SK-N-SH (cell line): ENCODE measurements at regions of chr2 and their contacts with region 1.

Region 1: GRCh38 chr2:29309090-29310029 is 194.1 kb downstream of the CLIP4 start:
- DNase-seq: peak; percentile 78
- H3K4me3 ChIP-seq: no peak overlapping the region
- H3K27ac ChIP-seq: peak overlapping the region in 1 of 2 experiments; percentile 93; a peak in 2 of 4 replicates
- H3K4me1 ChIP-seq: peaks cover 7 to 82% of the 10 kb centered on the region in 2 experiments; a peak in 2 of 4 replicates
- H3K27me3 ChIP-seq: no peaks in the 10 kb centered on the region
- CTCF ChIP-seq: peak; percentile 95
- EP300 ChIP-seq: no peak
- RAD21 ChIP-seq: peak; percentile 73

Region 2: DNA sequence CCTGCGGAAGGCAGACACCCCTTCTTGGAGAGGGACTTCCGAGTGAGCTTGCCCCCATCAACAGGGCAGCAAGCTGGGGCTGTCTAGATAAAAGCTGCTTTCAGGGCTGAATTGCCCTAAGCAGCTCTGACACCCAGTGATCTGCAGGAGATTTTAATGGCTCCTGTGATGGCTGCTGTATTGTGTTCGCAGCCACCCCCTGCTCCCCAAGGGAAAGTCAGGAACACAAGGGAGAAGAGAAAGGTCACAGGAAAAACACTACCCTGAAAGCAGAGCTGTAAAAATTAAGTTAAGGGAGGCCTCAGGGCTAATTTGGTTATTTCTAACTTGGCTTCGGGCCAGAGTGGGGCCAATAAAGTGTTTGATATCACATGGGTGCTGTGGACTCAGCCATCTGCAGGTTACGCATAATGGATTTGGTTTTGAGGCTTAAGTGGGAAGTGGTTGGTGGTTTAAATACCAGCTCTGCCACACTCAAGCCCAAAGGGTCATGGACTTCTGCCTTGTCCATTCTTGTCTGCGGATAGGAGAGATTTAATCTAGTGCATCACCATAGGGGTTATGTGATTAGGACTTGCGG is 46.6 kb before region 1 on chr2:
- CTCF ChIA-PET with region 1: interaction called, 38 read pairs
- POLR2A ChIA-PET with region 1: interaction called, 10 read pairs
- DNase-seq: peak; percentile 79
- H3K4me3 ChIP-seq: no peak overlapping the region; a peak in 1 of 4 replicates
- H3K27ac ChIP-seq: peak overlapping the region; percentile 4 to 100; a peak in 3 of 4 replicates
- H3K4me1 ChIP-seq: peaks cover 0 to 58% of the 10 kb centered on the region in 2 experiments; a peak in 3 of 4 replicates
- H3K27me3 ChIP-seq: no peaks in the 10 kb centered on the region
- CTCF ChIP-seq: no peak
- EP300 ChIP-seq: peak in 1 of 2 experiments; percentile 98; a peak in 2 of 4 replicates
- RAD21 ChIP-seq: peak; percentile 33

Region 3: GRCh38 chr2:29290293-29291047 is 18.9 kb before region 1 on chr2:
- CTCF ChIA-PET with region 1: interaction called, 43 read pairs
- POLR2A ChIA-PET with region 1: no interaction called
- DNase-seq: no peak
- H3K4me3 ChIP-seq: no peak overlapping the region
- H3K27ac ChIP-seq: peak overlapping the region in 1 of 2 experiments; percentile 1; a peak in 1 of 4 replicates
- H3K4me1 ChIP-seq: peaks cover 0 to 10% of the 10 kb centered on the region in 2 experiments; a peak in 2 of 4 replicates
- H3K27me3 ChIP-seq: no peaks in the 10 kb centered on the region
- CTCF ChIP-seq: no peak
- EP300 ChIP-seq: no peak
- RAD21 ChIP-seq: no peak

Region 4: GRCh38 chr2:29367986-29368658 is 58.8 kb after region 1 on chr2:
- CTCF ChIA-PET with region 1: interaction called, 12 read pairs
- POLR2A ChIA-PET with region 1: no interaction called
- DNase-seq: no peak
- H3K4me3 ChIP-seq: no peak overlapping the region
- H3K27ac ChIP-seq: peak overlapping the region in 1 of 2 experiments; percentile 39; a peak in 1 of 4 replicates
- H3K4me1 ChIP-seq: peaks cover 0 to 25% of the 10 kb centered on the region in 2 experiments; a peak in 1 of 4 replicates
- H3K27me3 ChIP-seq: no peaks in the 10 kb centered on the region; the same call in 1 of the 2 replicates
- CTCF ChIP-seq: no peak
- EP300 ChIP-seq: no peak
- RAD21 ChIP-seq: no peak

Region 5: DNA sequence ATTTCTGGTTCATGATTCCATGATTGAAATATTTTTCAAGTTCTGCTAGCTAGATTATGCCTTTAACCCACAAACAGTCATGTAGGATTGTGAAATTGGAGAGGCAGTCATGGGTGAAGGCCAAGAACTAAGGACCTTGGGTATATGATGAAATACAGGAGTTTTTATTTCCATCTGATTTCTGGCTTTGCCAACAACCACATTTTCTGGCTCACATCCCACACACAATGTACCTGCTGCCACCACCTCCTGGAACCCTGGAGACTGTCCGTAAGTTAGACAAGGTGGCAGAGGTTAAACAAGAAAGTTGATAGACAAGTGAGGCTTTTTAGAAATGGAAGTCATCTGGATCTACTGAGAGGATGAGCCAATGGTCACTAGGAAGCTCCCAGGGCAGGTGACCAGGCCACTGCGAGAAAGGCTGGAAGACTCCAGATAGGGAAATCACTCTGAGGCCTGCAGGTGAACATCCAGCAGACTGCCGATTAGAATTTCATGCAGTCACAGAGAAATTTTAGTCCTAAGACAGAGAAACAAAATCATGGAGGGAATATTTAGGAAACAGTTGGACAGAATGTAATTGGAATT is 210.1 kb after region 1 on chr2:
- CTCF ChIA-PET with region 1: interaction called, 33 read pairs
- POLR2A ChIA-PET with region 1: interaction called, 5 read pairs
- DNase-seq: no peak
- H3K4me3 ChIP-seq: no peak overlapping the region
- H3K27ac ChIP-seq: peak overlapping the region in 1 of 2 experiments; percentile 100; a peak in 2 of 4 replicates
- H3K4me1 ChIP-seq: peaks cover 9 to 69% of the 10 kb centered on the region in 2 experiments; a peak in 2 of 4 replicates
- H3K27me3 ChIP-seq: no peaks in the 10 kb centered on the region
- CTCF ChIP-seq: no peak
- EP300 ChIP-seq: no peak
- RAD21 ChIP-seq: no peak

Region 6: GRCh38 chr2:30072250-30072842 is 763.0 kb after region 1 on chr2:
- CTCF ChIA-PET with region 1: interaction called, 12 read pairs
- POLR2A ChIA-PET with region 1: no interaction called
- DNase-seq: peak; percentile 82
- H3K4me3 ChIP-seq: no peak overlapping the region
- H3K27ac ChIP-seq: no peak overlapping the region
- H3K4me1 ChIP-seq: peaks cover 0 to 2% of the 10 kb centered on the region in 2 experiments; a peak in 1 of 4 replicates
- H3K27me3 ChIP-seq: peaks cover 6% of the 10 kb centered on the region; the same call in 1 of the 2 replicates
- CTCF ChIP-seq: peak; percentile 87
- EP300 ChIP-seq: no peak
- RAD21 ChIP-seq: peak; percentile 99